MCF 10A (cell line): ENCODE measurements at regions of chr16 and their contacts with region 1.

Region 1: GRCh38 chr16:77971306-77972271 is 50.8 kb upstream of the CLEC3A start:
- DNase-seq: peak; percentile 90
- H3K4me3 Mint-ChIP-seq: no peak overlapping the region
- H3K27ac Mint-ChIP-seq: no peak overlapping the region
- H3K4me1 Mint-ChIP-seq: peaks cover 7% of the 10 kb centered on the region
- H3K27me3 Mint-ChIP-seq: peaks cover 2% of the 10 kb centered on the region
- CTCF ChIP-seq: peak; percentile 85

Region 2: GRCh38 chr16:77236063-77236511 is 735.5 kb before region 1 on chr16:
- CTCF ChIA-PET with region 1: interaction called, 3 read pairs
- POLR2A ChIA-PET with region 1: no interaction called
- intact Hi-C with region 1: loop called (anchors 1 kb)
- DNase-seq: peak; percentile 84
- H3K4me3 Mint-ChIP-seq: no peak overlapping the region
- H3K27ac Mint-ChIP-seq: no peak overlapping the region
- H3K4me1 Mint-ChIP-seq: peaks cover 8% of the 10 kb centered on the region
- H3K27me3 Mint-ChIP-seq: peaks cover 10% of the 10 kb centered on the region
- CTCF ChIP-seq: peak; percentile 100

Region 3: GRCh38 chr16:77599793-77600415 is 371.7 kb before region 1 on chr16:
- CTCF ChIA-PET with region 1: interaction called, 3 read pairs
- POLR2A ChIA-PET with region 1: no interaction called
- intact Hi-C with region 1: loop called (anchors 1 kb)
- DNase-seq: peak; percentile 60
- H3K4me3 Mint-ChIP-seq: no peak overlapping the region
- H3K27ac Mint-ChIP-seq: no peak overlapping the region
- H3K4me1 Mint-ChIP-seq: peaks cover 6% of the 10 kb centered on the region
- H3K27me3 Mint-ChIP-seq: peaks cover 30% of the 10 kb centered on the region
- CTCF ChIP-seq: peak; percentile 65

Region 4: GRCh38 chr16:77782694-77783093 is 188.9 kb before region 1 on chr16:
- CTCF ChIA-PET with region 1: interaction called, 5 read pairs
- POLR2A ChIA-PET with region 1: no interaction called
- intact Hi-C with region 1: loop called (anchors 2 kb)
- DNase-seq: peak; percentile 41
- H3K4me3 Mint-ChIP-seq: no peak overlapping the region
- H3K27ac Mint-ChIP-seq: no peak overlapping the region
- H3K4me1 Mint-ChIP-seq: peaks cover 13% of the 10 kb centered on the region
- H3K27me3 Mint-ChIP-seq: peaks cover 19% of the 10 kb centered on the region
- CTCF ChIP-seq: peak; percentile 26

Region 5: DNA sequence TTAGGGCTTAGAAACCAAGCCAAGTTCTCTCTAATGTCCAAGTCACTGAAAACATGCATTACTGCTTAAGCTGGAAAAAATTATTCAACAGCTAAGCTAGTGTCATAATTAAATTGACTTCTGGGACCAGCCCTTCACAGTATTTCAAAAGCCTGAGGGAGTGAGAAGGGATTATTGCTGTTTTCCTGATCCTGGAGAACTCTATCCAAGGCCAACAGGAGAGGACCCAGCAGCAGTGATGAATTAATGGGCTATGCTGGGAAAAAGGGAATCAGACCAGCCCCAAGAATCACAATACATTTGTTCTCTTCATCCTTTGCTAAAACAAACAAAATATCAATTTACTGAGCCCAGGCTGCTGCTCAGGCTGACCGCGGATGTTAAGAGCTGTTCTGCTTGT is 16.2 kb after region 1 on chr16:
- CTCF ChIA-PET with region 1: interaction called, 22 read pairs
- POLR2A ChIA-PET with region 1: no interaction called
- intact Hi-C with region 1: no loop called
- DNase-seq: no peak
- H3K4me3 Mint-ChIP-seq: no peak overlapping the region
- H3K27ac Mint-ChIP-seq: no peak overlapping the region
- H3K4me1 Mint-ChIP-seq: peaks cover 10% of the 10 kb centered on the region
- H3K27me3 Mint-ChIP-seq: no peaks in the 10 kb centered on the region
- CTCF ChIP-seq: no peak

Region 6: GRCh38 chr16:78002915-78003538 is 31.4 kb after region 1 on chr16:
- CTCF ChIA-PET with region 1: interaction called, 29 read pairs
- POLR2A ChIA-PET with region 1: no interaction called
- intact Hi-C with region 1: loop called (anchors 1 kb)
- DNase-seq: peak; percentile 90
- H3K4me3 Mint-ChIP-seq: no peak overlapping the region
- H3K27ac Mint-ChIP-seq: no peak overlapping the region
- H3K4me1 Mint-ChIP-seq: peaks cover 7% of the 10 kb centered on the region
- H3K27me3 Mint-ChIP-seq: no peaks in the 10 kb centered on the region
- CTCF ChIP-seq: peak; percentile 91

Region 7: DNA sequence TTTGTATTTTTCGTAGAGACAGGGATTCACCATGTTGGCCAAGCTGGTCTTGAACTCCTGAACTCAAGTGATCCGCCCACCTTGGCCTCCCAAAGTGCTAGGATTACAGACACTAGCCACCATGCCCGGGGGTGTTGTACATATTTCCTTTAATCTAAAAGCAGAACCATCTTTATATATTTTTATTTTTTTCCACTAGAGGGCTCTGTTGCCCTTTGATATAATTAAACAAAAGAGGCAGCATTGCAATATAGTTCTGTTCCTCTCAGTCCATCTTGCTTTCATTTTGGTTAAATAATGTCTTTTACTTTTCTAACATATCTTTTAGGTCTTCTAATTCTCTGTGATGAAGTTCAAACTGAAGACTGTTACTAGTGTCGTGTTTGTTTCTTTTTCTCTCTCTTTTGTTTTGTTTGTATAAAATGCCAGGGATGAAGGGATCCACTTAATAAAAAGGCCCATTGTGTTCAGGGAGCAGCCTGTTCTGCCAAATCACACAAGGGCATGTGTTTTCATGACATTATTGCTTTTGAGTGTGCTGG is 151.3 kb after region 1 on chr16:
- CTCF ChIA-PET with region 1: interaction called, 19 read pairs
- POLR2A ChIA-PET with region 1: no interaction called
- intact Hi-C with region 1: loop called (anchors 1 kb)
- DNase-seq: peak; percentile 75
- H3K4me3 Mint-ChIP-seq: no peak overlapping the region
- H3K27ac Mint-ChIP-seq: no peak overlapping the region
- H3K4me1 Mint-ChIP-seq: peaks cover 6% of the 10 kb centered on the region
- H3K27me3 Mint-ChIP-seq: no peaks in the 10 kb centered on the region
- CTCF ChIP-seq: peak; percentile 51